Naive thymus-derived CD4-positive, alpha-beta T cell (primary cell): ENCODE measurements at regions of chr14 and their contacts with region 1.

Region 1: DNA sequence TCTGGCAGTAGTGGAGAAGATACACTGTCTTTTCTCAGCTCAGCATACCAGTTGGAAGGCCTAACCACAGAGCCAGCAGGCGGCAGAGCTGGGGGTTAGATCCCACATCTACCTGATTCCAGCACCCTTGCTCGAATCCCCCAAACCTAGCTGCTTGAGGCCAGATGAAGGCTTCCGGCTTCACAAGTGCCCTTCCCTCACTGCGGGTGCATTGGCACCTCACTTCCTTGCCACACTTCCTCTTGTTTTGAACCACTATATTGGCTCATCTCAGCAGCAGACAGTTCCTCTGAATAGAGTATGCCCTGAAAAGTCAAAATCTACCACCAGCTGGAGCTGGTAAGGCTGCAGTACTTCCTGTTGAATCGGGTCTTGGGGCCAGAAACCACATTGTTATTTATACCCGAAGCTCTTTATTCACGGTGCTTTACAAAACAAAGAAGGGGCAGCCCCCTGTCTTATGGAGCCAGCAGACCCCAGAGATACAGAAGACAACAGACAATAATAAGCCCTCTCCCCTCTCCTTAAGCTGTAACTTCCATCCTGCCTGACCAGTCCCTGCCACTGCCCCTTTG is 233.7 kb downstream of the EFCAB11 start:
- DNase-seq: peak; percentile 43 to 91 (median 88)
- ATAC-seq: peak; percentile 96
- H3K4me3 ChIP-seq: peak overlapping the region; percentile 43
- H3K4me3 Mint-ChIP-seq: peak overlapping the region; percentile 65 to 81 (median 73)
- H3K27ac ChIP-seq: peak overlapping the region; percentile 70
- H3K27ac Mint-ChIP-seq: peak overlapping the region; percentile 94 to 99 (median 98)
- H3K4me1 ChIP-seq: peaks cover 76 to 78% of the 10 kb centered on the region in 2 donors
- H3K4me1 Mint-ChIP-seq: peaks cover 68 to 99% (median 92%) of the 10 kb centered on the region in 7 donors
- H3K27me3 ChIP-seq: no peaks in the 10 kb centered on the region
- H3K27me3 Mint-ChIP-seq: no peaks in the 10 kb centered on the region

Region 2: GRCh38 chr14:89178802-89179535 is 541.9 kb before region 1 on chr14:
- CTCF ChIA-PET with region 1: no interaction called
- POLR2A ChIA-PET with region 1: no interaction called
- intact Hi-C with region 1: loop called in 1 of 2 experiments (anchors 2 kb)
- DNase-seq: no peak
- ATAC-seq: no peak
- H3K4me3 ChIP-seq: no peak overlapping the region
- H3K4me3 Mint-ChIP-seq: no peak overlapping the region
- H3K27ac ChIP-seq: no peak overlapping the region
- H3K27ac Mint-ChIP-seq: peak overlapping the region in 6 of 9 donors; percentile 10 to 66 (median 26)
- H3K4me1 ChIP-seq: peaks cover 0 to 4% of the 10 kb centered on the region in 2 donors
- H3K4me1 Mint-ChIP-seq: peaks cover 5 to 44% (median 29%) of the 10 kb centered on the region in 7 donors
- H3K27me3 ChIP-seq: no peaks in the 10 kb centered on the region
- H3K27me3 Mint-ChIP-seq: no peaks in the 10 kb centered on the region

Region 3: GRCh38 chr14:89641495-89642175 is 79.2 kb before region 1 on chr14:
- CTCF ChIA-PET with region 1: interaction called, 4 read pairs
- POLR2A ChIA-PET with region 1: interaction called, 10 read pairs
- intact Hi-C with region 1: loop called in 1 of 2 experiments (anchors 1 kb)
- DNase-seq: peak in 6 of 9 donors; percentile 25 to 52 (median 36)
- ATAC-seq: peak; percentile 88
- H3K4me3 ChIP-seq: peak overlapping the region; percentile 42
- H3K4me3 Mint-ChIP-seq: peak overlapping the region; percentile 58 to 87 (median 74)
- H3K27ac ChIP-seq: peak overlapping the region; percentile 81
- H3K27ac Mint-ChIP-seq: peak overlapping the region; percentile 75 to 99 (median 96)
- H3K4me1 ChIP-seq: peaks cover 13 to 45% of the 10 kb centered on the region in 2 donors
- H3K4me1 Mint-ChIP-seq: peaks cover 23 to 74% (median 60%) of the 10 kb centered on the region in 7 donors
- H3K27me3 ChIP-seq: no peaks in the 10 kb centered on the region
- H3K27me3 Mint-ChIP-seq: no peaks in the 10 kb centered on the region

Region 4: GRCh38 chr14:89701211-89702043 is 19.4 kb before region 1 on chr14:
- CTCF ChIA-PET with region 1: interaction called, 3 read pairs
- POLR2A ChIA-PET with region 1: interaction called, 40 read pairs
- intact Hi-C with region 1: loop called (anchors 1 kb)
- DNase-seq: peak; percentile 67 to 88 (median 80)
- ATAC-seq: peak; percentile 95
- H3K4me3 ChIP-seq: peak overlapping the region; percentile 76
- H3K4me3 Mint-ChIP-seq: peak overlapping the region; percentile 73 to 93 (median 88)
- H3K27ac ChIP-seq: peak overlapping the region; percentile 69
- H3K27ac Mint-ChIP-seq: peak overlapping the region; percentile 75 to 98 (median 89)
- H3K4me1 ChIP-seq: peaks cover 12 to 23% of the 10 kb centered on the region in 2 donors
- H3K4me1 Mint-ChIP-seq: peaks cover 16 to 73% (median 59%) of the 10 kb centered on the region in 7 donors
- H3K27me3 ChIP-seq: no peaks in the 10 kb centered on the region
- H3K27me3 Mint-ChIP-seq: no peaks in the 10 kb centered on the region

Region 5: DNA sequence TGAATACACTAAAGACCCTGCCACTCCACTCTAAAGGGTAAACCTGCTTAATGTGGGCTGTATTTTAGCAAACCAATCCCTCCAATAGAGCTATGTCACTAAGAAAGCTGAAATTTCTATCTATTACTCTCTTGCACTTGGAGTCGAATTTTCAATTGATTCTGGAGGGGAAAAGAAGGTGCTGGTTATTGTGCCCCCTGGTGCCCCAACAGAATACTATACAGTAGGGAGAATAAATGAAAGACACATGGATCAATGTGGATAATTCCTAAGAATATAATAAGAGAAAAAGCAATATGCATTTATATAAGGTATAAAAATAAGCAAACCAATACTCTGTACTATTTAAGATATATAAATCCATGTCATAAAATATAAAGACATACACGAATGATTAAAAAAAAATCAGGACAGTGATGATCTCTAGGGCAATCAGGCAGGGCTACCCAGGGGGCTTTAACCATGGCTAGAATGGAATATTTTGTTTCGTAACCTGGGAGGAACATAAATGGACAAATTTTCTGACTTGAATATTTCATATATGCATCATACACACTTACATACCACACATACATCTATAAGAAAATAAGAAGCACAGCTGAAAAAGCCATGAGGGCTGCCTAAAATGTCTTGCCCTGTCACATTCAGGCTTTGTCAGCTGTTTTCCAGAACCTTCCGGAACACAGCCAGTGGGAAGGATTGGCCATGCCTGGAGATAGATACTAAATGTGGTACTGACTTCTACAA is 179.3 kb after region 1 on chr14:
- CTCF ChIA-PET with region 1: no interaction called
- POLR2A ChIA-PET with region 1: no interaction called
- intact Hi-C with region 1: loop called in 1 of 2 experiments (anchors 5 kb)
- DNase-seq: peak in 4 of 9 donors; percentile 10 to 34 (median 20)
- ATAC-seq: no peak
- H3K4me3 ChIP-seq: no peak overlapping the region
- H3K4me3 Mint-ChIP-seq: no peak overlapping the region
- H3K27ac ChIP-seq: no peak overlapping the region
- H3K27ac Mint-ChIP-seq: no peak overlapping the region
- H3K4me1 ChIP-seq: peaks cover 0 to 13% of the 10 kb centered on the region in 2 donors
- H3K4me1 Mint-ChIP-seq: peaks cover 8 to 16% (median 15%) of the 10 kb centered on the region in 7 donors
- H3K27me3 ChIP-seq: no peaks in the 10 kb centered on the region
- H3K27me3 Mint-ChIP-seq: peaks cover 0 to 13% (median 7%) of the 10 kb centered on the region in 5 donors

Region 6: DNA sequence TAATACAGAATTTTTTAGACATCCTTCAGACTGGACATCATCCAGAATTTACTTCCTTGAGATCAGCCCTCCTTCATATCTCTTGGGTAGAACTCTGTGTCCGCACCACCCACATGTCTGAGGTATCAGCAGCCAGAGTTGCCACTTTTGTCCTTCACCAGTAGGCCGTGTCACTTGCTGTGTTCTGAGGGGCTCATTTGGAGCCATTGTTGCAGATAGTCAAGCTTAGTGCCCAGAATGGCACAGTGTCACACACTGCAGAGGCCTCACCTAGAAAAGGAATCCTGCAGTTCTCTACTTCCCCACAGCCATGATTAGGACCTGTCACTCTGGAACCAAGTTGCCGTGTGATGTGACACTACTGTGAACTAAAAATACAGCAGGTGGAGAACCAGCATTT is 304.1 kb after region 1 on chr14:
- CTCF ChIA-PET with region 1: no interaction called
- POLR2A ChIA-PET with region 1: no interaction called
- intact Hi-C with region 1: no loop called
- DNase-seq: no peak
- ATAC-seq: no peak
- H3K4me3 ChIP-seq: no peak overlapping the region
- H3K4me3 Mint-ChIP-seq: no peak overlapping the region
- H3K27ac ChIP-seq: no peak overlapping the region
- H3K27ac Mint-ChIP-seq: peak overlapping the region in 2 of 9 donors; percentile 9 to 28
- H3K4me1 ChIP-seq: no peaks in the 10 kb centered on the region
- H3K4me1 Mint-ChIP-seq: peaks cover 0 to 4% (median 0%) of the 10 kb centered on the region in 7 donors
- H3K27me3 ChIP-seq: no peaks in the 10 kb centered on the region
- H3K27me3 Mint-ChIP-seq: no peaks in the 10 kb centered on the region